AG04450 (cell line): ENCODE measurements at regions of chrX and their contacts with region 1.

Region 1: GRCh38 chrX:150486011-150486410 is 82.4 kb upstream of the MTM1 start:
- DNase-seq: peak; percentile 11
- H3K4me3 ChIP-seq: no peak overlapping the region
- H3K27ac ChIP-seq: no peak overlapping the region
- H3K27me3 ChIP-seq: no peaks in the 10 kb centered on the region
- CTCF ChIP-seq: peak; percentile 71

Region 2: DNA sequence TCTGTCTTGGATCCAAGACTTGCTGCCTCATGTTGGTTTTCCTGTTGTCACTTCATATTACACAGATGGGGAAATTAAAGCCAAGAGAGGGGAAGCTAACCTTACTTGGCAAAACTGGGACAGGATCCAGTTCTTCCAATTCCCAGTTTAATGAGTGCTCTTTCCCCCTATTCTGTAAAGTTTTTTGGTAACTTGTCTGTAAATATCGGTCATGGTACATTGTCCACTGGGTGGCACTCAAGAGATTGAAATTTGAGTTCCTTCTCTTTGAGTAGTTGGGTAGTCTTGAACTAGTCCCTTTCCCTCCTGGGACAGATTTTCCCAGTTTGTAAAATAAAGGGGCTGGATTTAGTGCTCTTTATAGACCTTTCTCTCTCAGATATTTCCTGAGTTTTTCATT is 535.3 kb before region 1 on chrX:
- CTCF ChIA-PET with region 1: interaction called, 13 read pairs
- POLR2A ChIA-PET with region 1: no interaction called
- DNase-seq: peak; percentile 23
- H3K4me3 ChIP-seq: no peak overlapping the region
- H3K27ac ChIP-seq: no peak overlapping the region
- H3K27me3 ChIP-seq: no peaks in the 10 kb centered on the region
- CTCF ChIP-seq: peak; percentile 52

Region 3: GRCh38 chrX:149962859-149963757 is 522.9 kb before region 1 on chrX:
- CTCF ChIA-PET with region 1: interaction called, 10 read pairs
- POLR2A ChIA-PET with region 1: no interaction called
- DNase-seq: peak; percentile 33
- H3K4me3 ChIP-seq: no peak overlapping the region
- H3K27ac ChIP-seq: no peak overlapping the region
- H3K27me3 ChIP-seq: no peaks in the 10 kb centered on the region
- CTCF ChIP-seq: peak; percentile 70

Region 4: DNA sequence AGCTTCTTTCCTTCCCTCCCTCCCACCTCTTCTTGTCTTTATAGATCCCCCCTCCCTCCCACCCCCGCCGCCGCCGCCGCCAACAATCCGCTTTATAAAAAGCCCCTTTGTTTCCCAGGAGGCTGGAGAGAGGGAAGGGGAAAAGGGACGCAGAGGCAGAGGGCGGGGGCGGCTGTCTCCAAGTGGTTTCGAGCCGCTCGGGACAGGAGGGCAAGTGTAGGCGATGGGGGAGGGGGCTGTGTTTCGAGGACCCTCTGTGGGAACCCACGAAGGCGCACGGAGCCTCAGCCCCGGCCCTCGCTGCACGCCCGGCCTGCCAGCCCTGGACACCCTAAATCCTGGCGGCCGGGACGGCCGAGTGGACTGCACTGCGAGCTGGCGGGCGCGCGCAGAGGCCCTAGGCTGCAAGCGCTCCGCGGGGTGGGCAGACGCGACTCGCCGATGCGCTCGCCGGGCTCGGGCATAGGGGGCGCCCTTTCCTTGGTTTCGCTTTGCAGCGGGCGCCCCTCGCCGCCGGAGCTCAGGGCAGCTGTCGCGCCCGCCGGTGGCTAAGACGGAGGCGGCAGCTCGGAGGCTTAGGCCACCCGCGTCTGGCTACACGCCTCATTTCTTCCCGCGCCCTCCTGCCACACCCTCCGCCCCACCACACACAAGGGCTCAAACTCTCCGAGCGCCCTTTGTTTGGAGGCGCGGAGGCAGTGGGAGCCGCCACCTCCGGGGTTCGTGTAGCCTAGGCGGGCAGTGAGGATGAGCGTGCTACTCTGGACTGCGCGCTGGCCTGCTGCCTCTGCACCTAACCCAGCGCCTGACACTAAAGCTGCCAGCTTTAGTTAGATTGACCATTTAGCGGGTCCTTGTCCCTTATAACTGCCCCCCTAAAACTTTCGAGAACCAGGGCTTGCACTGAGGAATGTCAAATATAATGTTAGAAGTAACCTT is 120.7 kb before region 1 on chrX:
- CTCF ChIA-PET with region 1: interaction called, 21 read pairs
- POLR2A ChIA-PET with region 1: no interaction called
- DNase-seq: no peak
- H3K4me3 ChIP-seq: peak overlapping the region; percentile 74
- H3K27ac ChIP-seq: peak overlapping the region; percentile 85
- H3K27me3 ChIP-seq: no peaks in the 10 kb centered on the region
- CTCF ChIP-seq: peak; percentile 54

Region 5: GRCh38 chrX:150421816-150422215 is 64.2 kb before region 1 on chrX:
- CTCF ChIA-PET with region 1: no interaction called
- POLR2A ChIA-PET with region 1: no interaction called
- DNase-seq: no peak
- H3K4me3 ChIP-seq: no peak overlapping the region
- H3K27ac ChIP-seq: no peak overlapping the region
- H3K27me3 ChIP-seq: no peaks in the 10 kb centered on the region
- CTCF ChIP-seq: no peak